ENCODE measurements at regions of chr20 and their contacts with region 1.

Region 1: DNA sequence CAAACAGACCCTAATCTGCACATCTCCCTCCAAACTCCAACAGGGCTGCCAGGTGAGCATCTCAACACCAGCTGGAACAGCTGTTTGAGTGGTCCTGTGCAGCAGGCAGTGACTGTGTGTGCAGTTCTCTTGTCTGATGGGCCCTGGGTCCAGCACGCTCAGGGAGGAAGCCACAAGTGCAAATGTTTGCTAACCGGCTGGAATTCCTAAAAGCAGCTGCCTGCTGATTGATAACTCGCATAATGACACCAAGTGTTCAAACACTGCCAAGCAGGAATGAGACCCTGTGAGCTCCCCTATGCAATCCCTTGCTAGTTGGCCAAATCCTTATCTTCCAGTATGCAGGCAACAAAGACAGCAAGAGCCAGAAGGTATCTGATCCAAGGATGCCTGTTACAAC is 650.6 kb downstream of the CBLN4 start:
- DNase-seq: peak; percentile 70 to 79
- H3K4me3 ChIP-seq: no peak overlapping the region
- H3K4me3 Mint-ChIP-seq: no peak overlapping the region
- H3K27ac Mint-ChIP-seq: no peak overlapping the region
- H3K4me1 ChIP-seq: no peaks in the 10 kb centered on the region
- H3K4me1 Mint-ChIP-seq: peaks cover 6% of the 10 kb centered on the region
- H3K27me3 ChIP-seq: no peaks in the 10 kb centered on the region
- H3K27me3 Mint-ChIP-seq: no peaks in the 10 kb centered on the region
- CTCF ChIP-seq: peak in 1 of 2 experiments; percentile 16

Region 2: GRCh38 chr20:54980103-54980960 is 374.4 kb before region 1 on chr20:
- CTCF ChIA-PET with region 1: interaction called, 5 read pairs
- POLR2A ChIA-PET with region 1: no interaction called
- intact Hi-C with region 1: loop called (anchors 1 kb)
- DNase-seq: peak in 1 of 2 experiments; percentile 53
- H3K4me3 ChIP-seq: no peak overlapping the region
- H3K4me3 Mint-ChIP-seq: no peak overlapping the region
- H3K27ac Mint-ChIP-seq: no peak overlapping the region
- H3K4me1 ChIP-seq: no peaks in the 10 kb centered on the region
- H3K4me1 Mint-ChIP-seq: no peaks in the 10 kb centered on the region
- H3K27me3 ChIP-seq: no peaks in the 10 kb centered on the region
- H3K27me3 Mint-ChIP-seq: peaks cover 6% of the 10 kb centered on the region
- CTCF ChIP-seq: peak; percentile 64 to 66

Region 3: GRCh38 chr20:55057779-55058415 is 296.8 kb before region 1 on chr20:
- CTCF ChIA-PET with region 1: interaction called, 4 read pairs
- POLR2A ChIA-PET with region 1: no interaction called
- intact Hi-C with region 1: loop called (anchors 1 kb)
- DNase-seq: peak in 1 of 2 experiments; percentile 39
- H3K4me3 ChIP-seq: no peak overlapping the region
- H3K4me3 Mint-ChIP-seq: no peak overlapping the region
- H3K27ac Mint-ChIP-seq: no peak overlapping the region
- H3K4me1 ChIP-seq: no peaks in the 10 kb centered on the region
- H3K4me1 Mint-ChIP-seq: no peaks in the 10 kb centered on the region
- H3K27me3 ChIP-seq: no peaks in the 10 kb centered on the region
- H3K27me3 Mint-ChIP-seq: peaks cover 17% of the 10 kb centered on the region
- CTCF ChIP-seq: peak; percentile 69 to 70

Region 4: GRCh38 chr20:55320817-55321216 is 33.9 kb before region 1 on chr20:
- CTCF ChIA-PET with region 1: no interaction called
- POLR2A ChIA-PET with region 1: no interaction called
- intact Hi-C with region 1: no loop called
- DNase-seq: no peak
- H3K4me3 ChIP-seq: no peak overlapping the region
- H3K4me3 Mint-ChIP-seq: no peak overlapping the region
- H3K27ac Mint-ChIP-seq: no peak overlapping the region
- H3K4me1 ChIP-seq: no peaks in the 10 kb centered on the region
- H3K4me1 Mint-ChIP-seq: no peaks in the 10 kb centered on the region
- H3K27me3 ChIP-seq: no peaks in the 10 kb centered on the region
- H3K27me3 Mint-ChIP-seq: peaks cover 16% of the 10 kb centered on the region
- CTCF ChIP-seq: no peak

Measured in Caco-2 (cell line).